CD8-positive, alpha-beta memory T cell (primary cell): ENCODE measurements at regions of chr9 and their contacts with region 1.

Region 1: GRCh38 chr9:136631038-136632000 is 31.4 kb upstream of the EGFL7 start:
- DNase-seq: peak; percentile 61 to 87 (median 77)
- H3K4me3 ChIP-seq: no peak overlapping the region
- H3K4me3 Mint-ChIP-seq: no peak overlapping the region
- H3K27ac ChIP-seq: no peak overlapping the region
- H3K27ac Mint-ChIP-seq: no peak overlapping the region
- H3K4me1 ChIP-seq: peaks cover 6% of the 10 kb centered on the region
- H3K4me1 Mint-ChIP-seq: no peaks in the 10 kb centered on the region
- H3K27me3 ChIP-seq: no peaks in the 10 kb centered on the region
- H3K27me3 Mint-ChIP-seq: peaks cover 6 to 8% of the 10 kb centered on the region in 2 donors

Region 2: DNA sequence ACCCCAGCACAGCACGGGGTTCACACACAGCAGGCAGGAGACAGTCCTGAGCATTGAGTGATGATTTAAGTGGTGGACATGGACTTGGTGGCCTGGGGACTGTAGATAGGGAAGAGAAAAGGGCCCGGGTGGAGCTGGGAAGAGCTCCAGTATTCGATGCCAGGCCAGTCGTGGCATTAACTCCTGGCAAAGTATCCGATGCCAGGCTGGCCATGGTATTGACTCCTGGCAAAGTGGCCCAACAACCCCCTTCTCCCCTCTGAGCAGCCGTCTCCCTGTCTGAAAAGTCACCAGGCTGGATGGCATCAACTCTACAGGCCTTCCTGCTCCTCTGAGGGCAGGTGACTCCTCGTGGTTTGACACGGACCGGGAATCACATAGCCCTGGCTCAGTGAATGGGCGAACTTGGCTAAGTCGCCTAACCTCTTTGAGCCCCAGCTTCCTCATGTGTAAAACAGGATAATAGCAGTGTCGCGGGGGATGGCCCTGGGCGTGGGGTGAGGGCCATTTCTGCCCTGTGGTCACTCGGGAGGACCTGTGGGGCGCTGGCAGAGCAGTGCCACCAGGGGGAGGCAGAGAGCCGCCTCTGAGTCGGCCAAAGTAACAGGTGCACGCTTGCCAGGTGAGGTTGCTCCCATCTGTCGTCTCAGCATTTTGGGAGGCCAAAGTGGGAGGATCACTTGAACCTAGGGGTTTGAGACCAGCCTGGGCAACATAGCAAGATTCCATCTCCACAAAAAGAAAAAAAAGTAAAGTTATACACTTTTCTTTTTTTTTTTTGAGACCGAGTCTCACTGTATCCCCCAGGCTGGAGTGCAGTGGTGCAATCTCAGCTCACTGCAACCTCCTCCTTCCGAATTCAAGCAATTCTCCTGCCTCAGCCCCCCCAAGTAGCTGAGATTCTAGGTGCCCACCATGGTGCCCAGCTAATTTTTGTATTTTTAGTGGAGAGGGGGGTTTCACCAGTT is 142.8 kb before region 1 on chr9:
- CTCF ChIA-PET with region 1: interaction called, 82 read pairs
- POLR2A ChIA-PET with region 1: interaction called, 6 read pairs
- DNase-seq: peak; percentile 65 to 82 (median 71)
- H3K4me3 ChIP-seq: no peak overlapping the region
- H3K4me3 Mint-ChIP-seq: peak overlapping the region in 1 of 7 donors; percentile 58
- H3K27ac ChIP-seq: no peak overlapping the region
- H3K27ac Mint-ChIP-seq: peak overlapping the region in 2 of 8 donors; percentile 62 to 91
- H3K4me1 ChIP-seq: peaks cover 12% of the 10 kb centered on the region
- H3K4me1 Mint-ChIP-seq: peaks cover 0 to 7% (median 7%) of the 10 kb centered on the region in 3 donors
- H3K27me3 ChIP-seq: no peaks in the 10 kb centered on the region
- H3K27me3 Mint-ChIP-seq: no peaks in the 10 kb centered on the region

Region 3: GRCh38 chr9:136865735-136866103 is 234.4 kb after region 1 on chr9:
- CTCF ChIA-PET with region 1: no interaction called
- POLR2A ChIA-PET with region 1: no interaction called
- DNase-seq: peak in 1 of 5 donors; percentile 19
- H3K4me3 ChIP-seq: peak overlapping the region; percentile 66
- H3K4me3 Mint-ChIP-seq: peak overlapping the region; percentile 81 to 95 (median 84)
- H3K27ac ChIP-seq: peak overlapping the region; percentile 69
- H3K27ac Mint-ChIP-seq: peak overlapping the region in 7 of 8 donors; percentile 63 to 90 (median 81)
- H3K4me1 ChIP-seq: peaks cover 7% of the 10 kb centered on the region
- H3K4me1 Mint-ChIP-seq: peaks cover 12 to 23% (median 17%) of the 10 kb centered on the region in 3 donors
- H3K27me3 ChIP-seq: no peaks in the 10 kb centered on the region
- H3K27me3 Mint-ChIP-seq: no peaks in the 10 kb centered on the region